ENCODE measurements at regions of chr1 and their contacts with region 1.

Region 1: DNA sequence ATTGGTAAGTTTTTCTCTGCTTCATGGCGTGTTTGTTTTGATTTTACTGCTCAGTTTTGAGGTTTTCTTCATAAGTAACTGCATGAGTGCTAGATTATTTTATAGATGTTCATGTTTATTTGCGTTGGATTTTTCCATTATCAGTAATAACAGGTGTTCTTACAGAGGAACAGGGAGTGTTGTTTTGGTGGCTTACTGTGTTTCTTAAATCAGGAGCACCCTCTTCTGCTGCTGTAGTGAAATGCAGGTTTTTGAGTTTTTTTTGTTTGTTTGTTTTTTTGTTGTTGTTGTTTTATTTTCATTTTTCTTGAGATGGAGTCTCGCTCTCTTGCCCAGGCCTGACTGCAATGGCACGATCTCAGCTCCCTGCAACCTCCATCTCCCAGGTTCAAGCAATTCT is 32.6 kb downstream of the CTBS start:
- DNase-seq: peak; percentile 17
- ATAC-seq: peak; percentile 61; the same call in 1 of the 2 replicates
- H3K4me3 ChIP-seq: no peak overlapping the region
- H3K27ac ChIP-seq: no peak overlapping the region; the same call in 1 of the 2 replicates
- H3K4me1 ChIP-seq: peaks cover 17% of the 10 kb centered on the region
- H3K27me3 ChIP-seq: no peaks in the 10 kb centered on the region
- CTCF ChIP-seq: peak; percentile 83

Region 2: GRCh38 chr1:84442256-84442655 is 99.4 kb before region 1 on chr1:
- CTCF ChIA-PET with region 1: no interaction called
- POLR2A ChIA-PET with region 1: no interaction called
- in situ Hi-C with region 1: no loop called
- intact Hi-C with region 1: loop called (anchors 1 kb)
- DNase-seq: peak; percentile 72
- ATAC-seq: peak; percentile 93
- H3K4me3 ChIP-seq: no peak overlapping the region
- H3K27ac ChIP-seq: no peak overlapping the region
- H3K4me1 ChIP-seq: no peaks in the 10 kb centered on the region
- H3K27me3 ChIP-seq: no peaks in the 10 kb centered on the region
- CTCF ChIP-seq: peak; percentile 59; the same call in 1 of the 2 replicates

Region 3: GRCh38 chr1:84525779-84526178 is 15.9 kb before region 1 on chr1:
- CTCF ChIA-PET with region 1: no interaction called
- POLR2A ChIA-PET with region 1: no interaction called
- in situ Hi-C with region 1: no loop called
- intact Hi-C with region 1: loop called (anchors 2 kb)
- DNase-seq: no peak
- ATAC-seq: no peak
- H3K4me3 ChIP-seq: no peak overlapping the region
- H3K27ac ChIP-seq: no peak overlapping the region
- H3K4me1 ChIP-seq: no peaks in the 10 kb centered on the region
- H3K27me3 ChIP-seq: no peaks in the 10 kb centered on the region
- CTCF ChIP-seq: no peak

Measured in Panc1 (cell line).